ENCODE measurements at regions of chr11 and their contacts with region 1.

Region 1: GRCh38 chr11:33996498-33997454 is 54.8 kb upstream of the CAPRIN1 start:
- DNase-seq: peak; percentile 87
- H3K4me3 Mint-ChIP-seq: no peak overlapping the region
- H3K27ac Mint-ChIP-seq: no peak overlapping the region
- H3K4me1 Mint-ChIP-seq: peaks cover 13% of the 10 kb centered on the region
- H3K27me3 Mint-ChIP-seq: peaks cover 12% of the 10 kb centered on the region

Region 2: GRCh38 chr11:33515347-33515746 is 481.4 kb before region 1 on chr11:
- CTCF ChIA-PET with region 1: no interaction called
- intact Hi-C with region 1: no loop called
- DNase-seq: peak; percentile 12
- H3K4me3 Mint-ChIP-seq: no peak overlapping the region
- H3K27ac Mint-ChIP-seq: no peak overlapping the region
- H3K4me1 Mint-ChIP-seq: peaks cover 2% of the 10 kb centered on the region
- H3K27me3 Mint-ChIP-seq: peaks cover 11% of the 10 kb centered on the region

Region 3: DNA sequence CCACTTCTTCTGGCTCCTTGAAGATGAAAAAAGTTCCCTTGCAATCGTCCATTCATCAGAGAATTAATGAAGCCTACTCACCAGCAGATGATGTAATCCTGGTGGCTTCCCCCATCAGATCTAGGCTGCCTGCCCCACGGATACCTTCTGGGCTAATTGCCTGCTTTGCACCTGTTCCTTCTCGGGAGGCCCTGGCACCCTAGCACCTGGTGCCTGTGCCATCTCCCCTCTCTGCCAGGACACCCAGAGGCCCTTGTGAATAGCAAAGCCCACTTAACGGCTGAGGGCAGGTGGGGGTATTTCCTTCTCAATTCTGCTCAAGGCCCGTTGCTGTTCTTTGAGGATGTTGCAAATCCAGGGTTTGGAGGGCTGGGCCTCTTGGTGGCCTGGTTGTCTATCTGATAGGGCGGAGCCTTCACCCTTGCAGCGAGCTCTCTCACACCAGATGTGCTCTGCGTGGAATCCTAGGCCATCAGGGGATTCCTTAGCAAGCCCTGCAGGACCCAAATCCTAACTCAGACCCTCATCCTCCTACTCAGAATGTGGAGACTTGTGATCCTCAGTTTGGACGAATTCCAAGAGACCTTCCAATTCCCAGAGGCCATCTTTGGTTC is 105.0 kb before region 1 on chr11 and contains the start of gene LMO2:
- CTCF ChIA-PET with region 1: no interaction called
- intact Hi-C with region 1: no loop called
- DNase-seq: no peak
- H3K4me3 Mint-ChIP-seq: peak within 1 kb of the TSS; percentile 20
- H3K27ac Mint-ChIP-seq: peak within 1 kb of the TSS; percentile 54
- H3K4me1 Mint-ChIP-seq: peaks cover 46% of the 10 kb centered on the region
- H3K27me3 Mint-ChIP-seq: peaks cover 58% of the 10 kb centered on the region
- total RNA-seq, gene LMO2: not detected

Region 4: GRCh38 chr11:34051349-34052035 is 54.7 kb after region 1 on chr11 and contains the start of gene CAPRIN1:
- CTCF ChIA-PET with region 1: interaction called, 5 read pairs
- intact Hi-C with region 1: loop called (anchors 1 kb)
- DNase-seq: peak; percentile 86
- H3K4me3 Mint-ChIP-seq: peak within 1 kb of the TSS; percentile 96
- H3K27ac Mint-ChIP-seq: peak within 1 kb of the TSS; percentile 97
- H3K4me1 Mint-ChIP-seq: peaks cover 14% of the 10 kb centered on the region
- H3K27me3 Mint-ChIP-seq: no peaks in the 10 kb centered on the region
- total RNA-seq, gene CAPRIN1: 274 to 289 TPM

Region 5: GRCh38 chr11:34105079-34105956 is 108.5 kb after region 1 on chr11 and contains the start of gene NAT10:
- CTCF ChIA-PET with region 1: interaction called, 12 read pairs
- intact Hi-C with region 1: loop called (anchors 1 kb)
- DNase-seq: peak; percentile 98
- H3K4me3 Mint-ChIP-seq: peak within 1 kb of the TSS; percentile 94
- H3K27ac Mint-ChIP-seq: peak within 1 kb of the TSS; percentile 94
- H3K4me1 Mint-ChIP-seq: peaks cover 51% of the 10 kb centered on the region
- H3K27me3 Mint-ChIP-seq: no peaks in the 10 kb centered on the region
- total RNA-seq, gene NAT10: 91.0 to 93.3 TPM

Region 6: DNA sequence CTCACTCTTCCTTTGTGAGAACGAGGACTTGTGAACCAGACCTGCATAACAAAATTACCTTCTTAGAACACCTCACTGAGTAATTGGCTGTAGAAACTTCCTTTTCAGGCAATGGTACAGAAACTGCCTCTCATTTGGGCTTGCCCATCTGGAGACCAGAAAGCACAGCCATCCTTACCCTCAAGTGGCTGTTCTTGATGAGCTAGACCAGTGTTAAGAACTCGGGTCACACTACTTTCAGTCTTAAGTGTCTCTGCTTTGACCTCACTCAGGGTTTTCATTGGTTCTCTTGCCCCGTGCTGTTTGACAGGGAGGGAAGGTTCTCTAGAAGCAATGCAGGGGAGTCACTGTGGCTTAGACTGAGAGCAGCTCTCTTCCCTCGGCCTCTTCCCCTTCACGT is 138.0 kb after region 1 on chr11:
- CTCF ChIA-PET with region 1: interaction called, 3 read pairs
- intact Hi-C with region 1: loop called (anchors 10 kb)
- DNase-seq: no peak
- H3K4me3 Mint-ChIP-seq: no peak overlapping the region
- H3K27ac Mint-ChIP-seq: no peak overlapping the region
- H3K4me1 Mint-ChIP-seq: peaks cover 12% of the 10 kb centered on the region
- H3K27me3 Mint-ChIP-seq: no peaks in the 10 kb centered on the region

Region 7: DNA sequence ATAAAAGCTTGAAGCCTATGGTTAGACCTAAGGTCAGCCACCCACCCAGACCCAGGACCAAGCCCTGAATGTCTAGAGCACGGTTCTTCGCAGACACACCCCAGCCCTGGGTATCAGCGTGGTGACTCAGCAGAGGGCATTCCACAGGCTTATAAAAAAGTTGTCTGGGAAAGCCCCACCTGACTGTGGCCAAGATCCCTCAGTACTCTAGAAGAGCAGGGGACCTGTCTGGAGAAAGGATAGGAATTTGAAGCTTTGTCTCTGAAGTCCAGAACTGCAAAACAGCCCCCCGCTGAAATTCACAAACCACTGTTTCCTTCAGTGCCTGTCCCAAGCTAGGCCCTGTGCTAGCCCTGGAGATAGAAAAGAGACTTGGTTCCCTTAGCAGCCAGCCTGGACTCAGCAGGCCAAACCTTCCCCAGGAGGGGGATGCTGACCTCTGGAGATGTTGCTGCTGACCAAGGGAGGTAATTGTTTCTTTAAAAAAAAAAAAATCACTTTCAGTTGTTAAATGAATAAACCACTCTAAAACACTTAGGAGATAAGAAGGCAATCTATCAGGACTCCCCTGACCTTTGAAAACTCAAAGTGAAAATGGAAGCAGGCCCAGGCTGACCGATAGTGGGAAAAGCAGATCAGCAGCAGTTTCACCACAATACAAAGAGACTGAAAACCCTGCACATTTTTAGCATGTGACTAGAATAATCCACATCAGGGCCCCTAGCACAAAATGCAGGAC is 247.1 kb after region 1 on chr11:
- CTCF ChIA-PET with region 1: no interaction called
- intact Hi-C with region 1: loop called (anchors 10 kb)
- DNase-seq: peak; percentile 77
- H3K4me3 Mint-ChIP-seq: no peak overlapping the region
- H3K27ac Mint-ChIP-seq: peak overlapping the region; percentile 46
- H3K4me1 Mint-ChIP-seq: peaks cover 78% of the 10 kb centered on the region
- H3K27me3 Mint-ChIP-seq: peaks cover 2% of the 10 kb centered on the region

Region 8: GRCh38 chr11:34468209-34468841 is 471.5 kb after region 1 on chr11:
- CTCF ChIA-PET with region 1: no interaction called
- intact Hi-C with region 1: loop called (anchors 10 kb)
- DNase-seq: peak; percentile 78
- H3K4me3 Mint-ChIP-seq: no peak overlapping the region
- H3K27ac Mint-ChIP-seq: no peak overlapping the region
- H3K4me1 Mint-ChIP-seq: no peaks in the 10 kb centered on the region
- H3K27me3 Mint-ChIP-seq: no peaks in the 10 kb centered on the region

Region 9: DNA sequence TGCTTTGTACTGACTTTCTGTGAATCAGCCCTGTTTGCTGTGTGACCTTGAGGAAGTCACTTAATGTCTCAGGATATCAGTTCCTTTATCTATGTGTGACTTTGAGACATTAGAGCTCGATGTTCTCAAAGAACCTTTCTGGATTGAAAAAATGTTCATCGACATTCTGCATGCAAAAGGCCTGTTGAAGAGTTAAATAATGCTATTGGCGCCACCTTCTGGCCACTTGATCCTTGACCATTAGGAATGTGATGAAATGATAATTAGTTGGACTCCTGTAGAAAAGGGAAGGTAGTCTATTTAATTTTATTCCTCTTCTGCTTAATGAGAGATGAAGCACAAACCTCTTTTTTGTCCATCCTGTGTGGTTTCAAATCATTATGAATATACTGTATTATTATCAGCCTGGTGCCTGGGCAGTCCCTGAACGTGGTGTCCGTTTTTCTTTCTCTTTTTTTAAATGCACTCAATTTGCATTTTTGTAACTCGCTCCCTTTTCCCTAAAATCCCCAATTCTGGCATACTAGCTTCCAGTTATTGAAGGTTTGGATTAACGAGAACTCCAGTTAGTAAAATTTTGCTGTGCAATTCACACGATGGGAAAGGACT is 496.1 kb after region 1 on chr11:
- CTCF ChIA-PET with region 1: interaction called, 5 read pairs
- intact Hi-C with region 1: loop called (anchors 1 kb)
- DNase-seq: peak; percentile 73
- H3K4me3 Mint-ChIP-seq: no peak overlapping the region
- H3K27ac Mint-ChIP-seq: no peak overlapping the region
- H3K4me1 Mint-ChIP-seq: no peaks in the 10 kb centered on the region
- H3K27me3 Mint-ChIP-seq: no peaks in the 10 kb centered on the region